Right lobe of liver (tissue), 6 donors: ENCODE measurements at regions of chr12 and their contacts with region 1.

Region 1: DNA sequence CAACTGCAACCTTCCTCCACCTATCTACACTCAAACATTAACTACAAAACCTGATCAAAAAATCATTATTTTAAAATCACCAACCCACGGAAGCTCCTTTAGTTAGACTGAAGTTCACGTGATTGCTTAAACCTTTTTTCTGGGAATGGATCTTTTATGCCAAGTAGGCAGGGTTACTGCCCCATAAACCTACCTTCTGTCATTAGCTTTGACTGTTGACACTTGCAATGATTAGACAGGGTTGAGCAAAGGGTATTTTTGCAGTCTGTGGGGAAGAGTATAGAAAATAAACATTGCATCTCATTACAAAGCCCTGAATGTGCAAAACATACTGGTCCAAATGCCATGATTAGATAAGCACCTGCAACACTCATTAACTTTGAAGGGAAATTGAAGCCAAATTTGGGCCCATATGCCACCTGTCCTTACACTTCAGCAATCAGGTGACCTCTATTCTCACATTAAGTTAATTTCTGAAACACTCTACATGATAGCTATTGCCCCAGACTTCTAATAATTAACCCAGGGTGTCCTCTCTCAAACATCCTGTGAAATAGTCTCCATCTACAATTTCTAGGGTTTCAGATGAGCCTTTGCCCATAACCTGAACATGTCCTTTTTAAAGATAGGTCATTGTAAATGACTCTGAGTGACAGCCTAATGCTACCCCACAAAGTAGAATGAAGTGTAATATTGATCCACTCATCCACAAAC is 156.0 kb upstream of the PLEKHG7 start:
- DNase-seq: no peak
- ATAC-seq: peak; percentile 70 to 89 (median 80)
- H3K4me3 ChIP-seq: no peak overlapping the region
- H3K27ac ChIP-seq: peak overlapping the region; percentile 66 to 86 (median 78)
- H3K4me1 ChIP-seq: peaks cover 0 to 49% (median 22%) of the 10 kb centered on the region in 4 donors
- H3K27me3 ChIP-seq: no peaks in the 10 kb centered on the region
- CTCF ChIP-seq: peak in 1 of 4 donors; percentile 18
- POLR2A ChIP-seq: peak; percentile 55

Region 2: DNA sequence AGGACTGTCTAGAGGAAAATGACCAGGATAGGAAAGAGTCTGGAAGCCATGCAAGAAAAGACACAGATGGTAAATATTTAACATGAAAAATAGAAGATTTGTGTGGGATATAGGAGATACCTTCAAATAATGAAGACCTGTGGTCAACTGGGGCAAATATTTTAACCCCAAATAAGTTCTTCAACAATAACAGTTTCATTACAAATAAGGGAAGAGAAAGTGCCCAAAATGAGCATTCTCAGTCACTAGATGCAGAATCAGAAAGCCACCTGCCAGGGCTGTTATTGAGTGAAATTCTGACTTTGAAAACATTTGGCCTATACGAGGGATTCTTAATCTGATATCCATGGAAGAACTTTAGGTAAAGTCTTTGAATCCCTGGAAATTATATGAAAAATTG is 75.2 kb before region 1 on chr12:
- intact Hi-C with region 1: no loop called
- DNase-seq: no peak
- ATAC-seq: no peak
- H3K4me3 ChIP-seq: no peak overlapping the region
- H3K27ac ChIP-seq: no peak overlapping the region
- H3K4me1 ChIP-seq: no peaks in the 10 kb centered on the region
- H3K27me3 ChIP-seq: no peaks in the 10 kb centered on the region
- CTCF ChIP-seq: no peak
- POLR2A ChIP-seq: no peak

Region 3: GRCh38 chr12:92488735-92489134 is 58.1 kb before region 1 on chr12:
- intact Hi-C with region 1: no loop called
- DNase-seq: no peak
- ATAC-seq: no peak
- H3K4me3 ChIP-seq: no peak overlapping the region
- H3K27ac ChIP-seq: no peak overlapping the region
- H3K4me1 ChIP-seq: no peaks in the 10 kb centered on the region
- H3K27me3 ChIP-seq: no peaks in the 10 kb centered on the region
- CTCF ChIP-seq: no peak
- POLR2A ChIP-seq: no peak

Region 4: DNA sequence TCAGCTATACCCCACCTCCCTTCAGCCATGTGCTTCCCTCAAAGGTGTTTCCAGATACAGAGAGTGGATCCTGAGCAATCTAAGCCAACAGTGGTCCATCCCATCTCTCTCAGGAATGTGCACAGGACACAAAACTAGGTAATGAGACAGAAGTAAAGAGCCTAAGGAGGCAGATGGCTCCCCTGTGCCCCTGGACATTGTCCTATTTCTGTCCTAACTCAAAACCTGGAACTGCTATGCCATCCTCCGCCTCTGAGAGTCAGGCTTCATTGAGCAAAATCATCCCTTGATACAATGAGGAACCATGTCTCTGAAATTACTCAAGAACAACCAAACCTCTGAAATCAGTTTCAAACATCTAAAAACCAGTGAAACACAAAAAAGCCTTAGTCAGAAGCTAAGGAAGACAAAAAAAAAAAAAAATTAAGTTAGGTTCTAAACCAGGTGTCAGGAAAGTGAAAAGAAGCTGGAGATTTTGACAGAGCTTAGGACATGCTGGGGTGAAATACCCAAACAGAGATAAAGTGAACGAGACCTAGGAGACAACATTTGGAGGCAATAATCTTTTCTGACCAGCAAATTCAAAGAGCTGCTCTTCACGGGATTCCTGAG is 44.3 kb before region 1 on chr12:
- intact Hi-C with region 1: loop called in 1 of 2 experiments (anchors 5 kb)
- DNase-seq: peak in 1 of 3 donors; percentile 53
- ATAC-seq: peak; percentile 35 to 72 (median 52)
- H3K4me3 ChIP-seq: peak overlapping the region; percentile 30 to 50 (median 44)
- H3K27ac ChIP-seq: peak overlapping the region; percentile 86 to 97 (median 92)
- H3K4me1 ChIP-seq: peaks cover 0 to 45% (median 17%) of the 10 kb centered on the region in 4 donors
- H3K27me3 ChIP-seq: no peaks in the 10 kb centered on the region
- CTCF ChIP-seq: peak; percentile 33 to 63 (median 51)
- POLR2A ChIP-seq: no peak

Region 5: GRCh38 chr12:92629349-92630065 is 82.7 kb after region 1 on chr12:
- intact Hi-C with region 1: no loop called
- DNase-seq: no peak
- ATAC-seq: no peak
- H3K4me3 ChIP-seq: no peak overlapping the region
- H3K27ac ChIP-seq: no peak overlapping the region
- H3K4me1 ChIP-seq: no peaks in the 10 kb centered on the region
- H3K27me3 ChIP-seq: no peaks in the 10 kb centered on the region
- CTCF ChIP-seq: no peak
- POLR2A ChIP-seq: no peak

Region 6: DNA sequence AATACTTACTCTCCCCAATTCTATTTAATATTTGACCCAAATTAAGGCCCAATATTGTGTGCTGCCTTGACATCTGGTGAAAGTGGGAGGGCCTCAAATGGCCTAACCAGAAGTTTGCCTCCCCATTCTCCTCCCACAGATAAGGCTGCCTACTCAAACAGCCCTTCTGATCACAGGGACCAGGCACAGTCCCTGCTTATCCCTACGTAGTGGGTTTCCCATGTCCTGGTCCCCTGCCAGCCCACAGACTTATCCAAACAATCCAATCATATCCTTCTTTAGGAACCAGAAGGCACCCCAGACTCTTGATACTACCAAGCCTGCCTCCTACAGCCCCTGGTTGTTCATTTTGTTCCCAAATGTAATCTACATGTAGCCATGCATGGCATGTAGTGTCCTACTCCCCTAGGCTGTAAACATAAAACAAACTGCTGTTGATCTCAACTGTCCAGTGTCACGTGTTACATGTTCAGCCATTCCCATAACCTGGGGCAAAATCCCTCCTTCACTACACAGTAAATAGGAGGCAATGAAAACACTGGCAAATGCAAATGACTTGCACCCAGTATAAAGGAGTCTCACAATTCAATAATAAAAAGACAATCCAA is 333.0 kb after region 1 on chr12:
- intact Hi-C with region 1: no loop called
- DNase-seq: no peak
- ATAC-seq: no peak
- H3K4me3 ChIP-seq: no peak overlapping the region
- H3K27ac ChIP-seq: no peak overlapping the region
- H3K4me1 ChIP-seq: no peaks in the 10 kb centered on the region
- H3K27me3 ChIP-seq: no peaks in the 10 kb centered on the region
- CTCF ChIP-seq: no peak
- POLR2A ChIP-seq: no peak